AG04450 (cell line): ENCODE measurements at regions of chrX and their contacts with region 1.

Region 1: DNA sequence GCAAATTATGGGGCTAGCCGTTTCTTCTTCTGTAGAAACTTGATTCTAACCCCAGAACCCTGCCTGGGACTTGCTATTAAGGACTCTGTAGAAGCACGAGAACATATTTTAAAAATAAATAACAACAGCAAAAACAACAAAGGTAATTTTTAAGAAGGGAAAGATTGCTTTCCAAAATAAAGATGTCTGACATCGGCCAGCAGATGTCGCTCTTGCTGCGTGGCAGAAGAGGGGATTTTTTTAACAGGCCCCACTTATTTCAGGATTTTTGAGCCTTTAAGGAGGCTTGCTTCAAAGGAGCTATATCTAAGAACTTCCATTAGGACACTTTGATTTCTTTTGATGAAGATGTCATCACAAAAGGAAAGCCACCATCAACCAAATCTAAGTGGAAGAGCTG is 62.8 kb upstream of the EGFL6 start:
- DNase-seq: peak; percentile 23
- H3K4me3 ChIP-seq: no peak overlapping the region
- H3K27ac ChIP-seq: no peak overlapping the region
- H3K27me3 ChIP-seq: no peaks in the 10 kb centered on the region
- CTCF ChIP-seq: peak; percentile 67

Region 2: GRCh38 chrX:12946838-12947544 is 559.6 kb before region 1 on chrX:
- CTCF ChIA-PET with region 1: interaction called, 17 read pairs
- POLR2A ChIA-PET with region 1: no interaction called
- DNase-seq: peak; percentile 58
- H3K4me3 ChIP-seq: no peak overlapping the region
- H3K27ac ChIP-seq: peak overlapping the region; percentile 52
- H3K27me3 ChIP-seq: no peaks in the 10 kb centered on the region
- CTCF ChIP-seq: peak; percentile 95

Region 3: DNA sequence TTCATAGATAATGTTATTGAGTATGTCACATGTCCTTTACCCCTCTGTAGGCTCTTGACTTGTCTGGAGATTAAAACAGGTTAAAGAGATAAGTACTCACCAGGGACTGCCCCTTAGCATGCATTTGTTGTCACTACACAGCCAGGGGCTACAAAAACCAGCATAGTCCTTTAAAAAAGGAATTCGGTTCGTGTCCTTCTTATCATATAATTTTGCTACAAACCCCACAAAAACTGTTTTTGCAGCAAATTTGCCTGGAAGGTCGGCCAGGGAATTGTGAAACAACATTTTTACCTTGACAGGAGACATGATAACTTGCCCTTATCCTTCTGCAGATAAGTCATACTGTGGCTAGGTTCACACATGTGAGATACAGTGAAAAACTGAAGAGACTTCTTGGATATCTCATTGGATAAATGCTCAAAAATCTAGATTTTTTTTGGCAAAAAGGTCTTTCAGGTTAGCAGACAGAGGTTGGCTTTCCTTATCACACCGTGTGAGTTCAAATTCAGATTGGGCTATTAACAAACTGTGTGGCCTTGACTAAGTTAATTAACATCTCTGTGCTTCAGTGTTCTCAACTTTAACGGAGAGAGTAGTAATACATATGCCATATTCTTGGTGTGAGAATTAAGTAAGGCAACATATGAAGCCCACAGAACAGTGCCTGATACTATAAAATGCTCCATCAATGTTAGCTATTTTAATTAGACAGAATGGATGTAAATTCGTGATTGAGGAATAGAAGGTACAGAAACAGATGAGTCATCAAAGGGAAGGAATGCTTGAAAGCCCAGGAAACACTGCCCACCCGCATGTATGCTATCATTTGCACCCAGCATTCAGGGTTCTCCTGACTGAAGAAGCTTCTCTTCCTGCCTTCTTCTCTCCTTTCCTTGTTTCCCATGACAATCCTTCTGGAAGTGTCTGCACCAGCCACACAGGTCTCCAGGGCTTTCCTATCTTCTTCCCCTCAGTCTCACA is 492.2 kb before region 1 on chrX:
- CTCF ChIA-PET with region 1: no interaction called
- POLR2A ChIA-PET with region 1: no interaction called
- DNase-seq: no peak
- H3K4me3 ChIP-seq: no peak overlapping the region
- H3K27ac ChIP-seq: no peak overlapping the region
- H3K27me3 ChIP-seq: no peaks in the 10 kb centered on the region
- CTCF ChIP-seq: no peak

Region 4: GRCh38 chrX:13646154-13646549 is 139.6 kb after region 1 on chrX:
- CTCF ChIA-PET with region 1: interaction called, 60 read pairs
- POLR2A ChIA-PET with region 1: no interaction called
- DNase-seq: no peak
- H3K4me3 ChIP-seq: no peak overlapping the region
- H3K27ac ChIP-seq: no peak overlapping the region
- H3K27me3 ChIP-seq: no peaks in the 10 kb centered on the region
- CTCF ChIP-seq: peak; percentile 67

Region 5: DNA sequence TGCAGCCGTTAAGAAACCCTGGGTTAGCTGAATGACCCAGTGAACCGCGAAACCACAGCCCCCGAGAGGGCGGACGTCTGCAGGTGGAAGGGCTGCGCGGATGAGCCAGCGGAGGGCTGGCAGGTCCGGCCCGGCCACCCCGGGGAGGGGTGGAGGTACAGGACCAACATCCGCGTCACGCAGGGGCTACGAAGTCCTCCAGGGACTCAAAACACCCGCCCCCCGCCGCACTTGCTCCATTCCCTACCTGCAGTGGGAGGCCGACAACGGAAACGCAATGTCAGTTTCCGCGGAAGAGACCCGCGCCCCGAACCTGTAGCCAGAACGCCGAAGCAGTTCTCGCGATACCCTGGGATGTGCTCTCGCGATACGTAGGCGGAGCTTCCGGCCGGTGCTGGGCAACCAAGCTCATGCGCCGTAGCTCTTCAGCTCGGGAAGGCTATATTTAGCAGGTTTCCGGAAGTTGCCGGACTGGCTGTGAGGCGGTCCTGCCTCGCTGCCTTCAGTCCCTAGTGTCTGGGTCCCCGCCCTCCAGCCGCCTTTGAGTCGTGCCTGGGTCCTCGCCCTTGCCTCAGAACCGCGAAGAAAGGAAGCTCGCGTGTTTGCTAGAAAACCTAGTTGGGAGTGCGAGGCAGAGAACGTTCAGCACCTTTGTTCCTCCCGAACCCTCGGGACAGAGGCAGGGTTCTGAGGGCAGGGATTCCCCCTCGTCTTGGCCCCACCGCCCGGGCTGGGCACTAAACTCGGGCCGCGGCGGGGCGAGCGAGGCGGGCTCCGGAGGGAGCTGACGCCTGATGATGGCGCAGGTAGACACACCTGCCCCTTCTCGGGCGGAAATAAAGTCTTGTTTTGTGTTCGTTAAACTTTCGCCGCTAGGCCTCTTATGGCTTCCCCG is 228.0 kb after region 1 on chrX and contains the starts of genes OFD1 and TRAPPC2:
- CTCF ChIA-PET with region 1: interaction called, 15 read pairs
- POLR2A ChIA-PET with region 1: no interaction called
- DNase-seq: peak; percentile 87
- H3K4me3 ChIP-seq: peak within 1 kb of the TSS; percentile 78
- H3K27ac ChIP-seq: peak within 1 kb of the TSS; percentile 81
- H3K27me3 ChIP-seq: no peaks in the 10 kb centered on the region
- CTCF ChIP-seq: no peak
- polyA plus RNA-seq, gene OFD1: 9.9 and 14.1 TPM in 2 replicates
- polyA plus RNA-seq, gene TRAPPC2: 9.7 and 11.1 TPM in 2 replicates

Region 6: GRCh38 chrX:13750204-13750603 is 243.6 kb after region 1 on chrX:
- CTCF ChIA-PET with region 1: interaction called, 26 read pairs
- POLR2A ChIA-PET with region 1: no interaction called
- DNase-seq: no peak
- H3K4me3 ChIP-seq: no peak overlapping the region
- H3K27ac ChIP-seq: no peak overlapping the region
- H3K27me3 ChIP-seq: no peaks in the 10 kb centered on the region
- CTCF ChIP-seq: peak; percentile 47

Region 7: DNA sequence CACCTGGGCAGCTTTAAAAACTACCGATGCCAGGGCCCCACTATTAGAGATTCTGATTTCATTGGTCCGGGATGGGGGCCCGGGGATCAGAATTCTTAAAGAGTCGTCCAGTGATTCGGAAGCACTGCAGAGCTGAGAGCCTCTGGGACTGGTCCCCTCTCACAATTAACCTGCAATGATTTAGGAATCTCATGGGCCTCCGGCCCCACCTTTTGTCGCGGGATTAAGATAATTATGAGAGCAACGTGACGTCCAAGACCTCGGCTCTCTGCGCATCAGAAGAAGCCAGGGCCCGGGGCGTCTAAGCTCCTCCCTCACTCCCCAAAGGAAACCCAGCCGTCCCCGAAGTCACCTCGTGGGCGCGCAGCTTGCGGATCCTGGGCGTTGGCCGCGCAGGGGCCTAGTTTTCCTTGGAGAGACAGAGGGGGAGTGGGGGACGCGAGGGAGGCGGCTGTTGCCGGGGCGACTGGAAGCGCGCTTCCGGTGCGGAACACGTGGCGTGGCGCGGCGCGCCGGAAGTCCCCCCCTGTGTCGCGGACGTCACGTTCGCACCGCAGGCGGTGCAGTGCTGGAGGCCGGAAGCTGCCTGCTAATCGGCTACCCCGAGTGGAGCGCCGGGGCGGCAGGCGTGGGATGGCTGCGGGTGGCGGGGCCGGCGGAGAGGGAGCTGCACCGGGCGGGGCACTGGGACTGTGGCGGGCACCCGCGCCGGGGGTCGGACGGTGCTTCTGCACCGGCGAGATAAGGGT is 523.0 kb after region 1 on chrX and contains the start of gene GEMIN8:
- CTCF ChIA-PET with region 1: interaction called, 16 read pairs
- POLR2A ChIA-PET with region 1: no interaction called
- DNase-seq: peak; percentile 67
- H3K4me3 ChIP-seq: peak within 1 kb of the TSS; percentile 64
- H3K27ac ChIP-seq: peak within 1 kb of the TSS; percentile 73
- H3K27me3 ChIP-seq: no peaks in the 10 kb centered on the region
- CTCF ChIP-seq: no peak
- polyA plus RNA-seq, gene GEMIN8: 19.7 and 22.1 TPM in 2 replicates

Region 8: GRCh38 chrX:14209034-14209433 is 702.5 kb after region 1 on chrX:
- CTCF ChIA-PET with region 1: no interaction called
- POLR2A ChIA-PET with region 1: no interaction called
- DNase-seq: no peak
- H3K4me3 ChIP-seq: no peak overlapping the region
- H3K27ac ChIP-seq: no peak overlapping the region
- H3K27me3 ChIP-seq: no peaks in the 10 kb centered on the region
- CTCF ChIP-seq: no peak